RWPE1 (cell line): ENCODE measurements at regions of chr2 and their contacts with region 1.

Region 1: GRCh38 chr2:237421542-237422116 is 7.7 kb upstream of the COL6A3 start:
- DNase-seq: peak; percentile 71
- H3K27ac ChIP-seq: no peak overlapping the region
- CTCF ChIP-seq: peak; percentile 71

Region 2: GRCh38 chr2:237432484-237433092 is 11.0 kb after region 1 on chr2:
- CTCF ChIA-PET with region 1: interaction called, 11 read pairs
- POLR2A ChIA-PET with region 1: no interaction called
- DNase-seq: peak; percentile 69
- H3K27ac ChIP-seq: peak overlapping the region; percentile 80
- CTCF ChIP-seq: no peak

Region 3: DNA sequence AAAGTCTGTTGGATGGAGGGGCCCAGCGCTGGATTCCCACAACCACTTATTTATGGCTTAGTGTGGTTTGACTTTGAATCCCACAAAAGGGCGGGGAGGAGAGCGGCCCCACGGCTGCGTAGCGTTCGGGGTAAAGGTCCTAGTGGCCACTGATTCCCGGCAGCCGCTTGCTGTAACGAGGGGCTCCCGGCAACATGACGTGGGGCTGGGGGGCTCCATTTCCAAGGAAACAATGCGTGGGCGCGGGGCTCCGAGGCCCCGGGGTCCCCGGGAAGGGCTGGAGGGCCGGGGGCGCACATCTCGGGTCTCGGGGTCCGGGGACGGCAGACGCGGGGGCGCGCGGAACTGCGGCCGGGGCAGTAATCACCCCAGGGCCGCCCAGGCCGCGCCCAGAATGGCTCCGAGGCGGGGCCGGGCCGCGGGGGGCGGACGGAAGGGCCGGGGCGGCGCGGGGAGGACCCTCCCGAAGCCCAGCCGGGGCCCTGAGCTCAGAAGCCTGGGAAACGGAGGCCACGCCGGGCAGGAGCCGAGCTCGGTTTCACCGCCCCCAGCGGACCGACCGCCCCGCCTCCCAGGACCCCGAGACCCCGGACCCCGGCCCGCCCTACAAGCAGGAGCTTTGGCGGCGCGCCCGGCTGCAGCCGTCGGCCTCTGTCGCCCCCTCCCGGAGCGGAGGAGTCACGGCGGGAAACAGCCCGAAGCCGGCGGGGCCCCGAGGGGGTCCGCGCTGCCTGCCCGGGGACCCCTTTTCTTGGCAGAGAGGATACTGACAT is 53.5 kb after region 1 on chr2:
- CTCF ChIA-PET with region 1: interaction called, 29 read pairs
- POLR2A ChIA-PET with region 1: interaction called, 3 read pairs
- DNase-seq: peak; percentile 79
- H3K27ac ChIP-seq: peak overlapping the region; percentile 85
- CTCF ChIP-seq: peak; percentile 92

Region 4: DNA sequence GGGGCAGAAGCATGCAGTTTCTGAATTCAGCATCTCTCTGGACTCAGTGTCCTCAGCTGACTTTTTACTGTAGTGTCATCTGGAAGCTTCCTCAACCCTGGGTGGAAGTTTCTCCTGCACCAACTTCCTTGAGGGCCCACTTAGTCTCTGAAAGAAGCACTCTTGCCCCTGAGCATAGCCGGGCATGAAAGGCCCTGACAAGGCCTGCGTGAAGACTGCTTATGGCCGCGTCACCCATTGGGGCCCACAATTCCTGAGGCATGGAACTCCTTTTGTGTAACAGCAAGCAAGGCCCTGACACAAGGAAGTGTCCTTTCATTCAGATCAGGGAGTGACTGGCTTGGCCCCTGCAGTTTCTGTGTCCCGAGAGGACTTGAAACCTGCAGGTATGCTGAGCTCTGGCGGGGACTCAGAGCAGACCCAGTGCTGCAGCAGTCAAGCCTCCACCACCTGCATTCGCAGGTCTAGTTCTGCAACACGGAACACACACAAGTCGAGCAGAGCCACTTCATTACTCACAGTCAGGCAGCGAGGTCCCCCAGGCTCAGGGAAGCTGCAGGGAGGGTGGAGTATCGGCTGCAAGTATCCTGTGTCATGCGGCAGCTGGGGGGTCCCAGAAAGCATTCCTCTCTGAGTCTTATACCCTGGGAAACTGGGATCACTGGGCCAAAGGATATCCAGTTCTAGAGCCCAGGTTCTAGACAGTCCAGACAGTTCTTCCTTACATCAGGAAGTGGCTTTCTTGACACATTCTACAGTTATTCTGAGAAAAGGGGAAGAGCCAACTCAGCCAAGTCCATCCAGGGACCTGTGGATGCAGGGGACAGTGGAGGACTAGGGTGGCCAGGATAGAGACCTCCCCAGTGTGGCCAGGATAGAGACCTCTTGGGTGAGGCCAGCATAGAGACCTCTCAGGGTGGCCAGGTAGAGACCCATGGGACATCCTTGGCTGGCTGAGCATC is 109.1 kb after region 1 on chr2:
- CTCF ChIA-PET with region 1: no interaction called
- POLR2A ChIA-PET with region 1: no interaction called
- DNase-seq: no peak
- H3K27ac ChIP-seq: no peak overlapping the region; the same call in 1 of the 2 replicates
- CTCF ChIP-seq: no peak

Region 5: DNA sequence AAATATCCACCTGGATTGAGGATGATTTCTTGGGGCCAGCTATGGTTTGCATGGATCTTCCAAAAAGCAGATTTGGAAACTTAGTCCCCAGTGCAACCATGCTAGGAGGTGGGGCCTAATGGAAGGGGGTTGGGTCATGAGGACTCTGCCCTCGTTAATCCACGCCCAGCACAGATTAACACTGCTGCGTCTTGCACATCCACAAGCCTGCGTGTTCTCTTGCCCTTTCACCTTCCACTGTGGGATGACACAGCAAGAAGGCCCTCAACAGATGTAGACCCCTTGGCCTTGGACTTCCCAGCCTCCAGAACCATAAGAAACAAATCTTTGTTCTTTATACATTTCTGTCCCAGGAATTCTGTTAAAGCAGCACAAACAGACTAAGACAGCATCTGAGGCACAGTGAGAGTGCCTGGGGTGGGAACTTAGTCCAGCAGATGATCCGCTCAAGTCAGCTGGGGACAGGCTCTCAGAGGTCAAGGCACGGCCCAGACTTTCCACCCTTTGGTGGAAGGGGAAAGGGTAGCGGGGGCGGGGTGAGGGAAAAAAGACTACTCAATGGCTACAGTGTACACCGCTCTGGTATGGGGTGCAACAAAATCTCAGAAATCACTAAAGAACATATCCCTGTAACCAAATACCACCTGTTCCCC is 166.5 kb after region 1 on chr2:
- CTCF ChIA-PET with region 1: interaction called, 11 read pairs
- POLR2A ChIA-PET with region 1: no interaction called
- DNase-seq: no peak
- H3K27ac ChIP-seq: no peak overlapping the region
- CTCF ChIP-seq: no peak